Psoas muscle (tissue), 8 donors: ENCODE measurements at regions of chr7 and their contacts with region 1.

Region 1: GRCh38 chr7:568031-568951 is 48.6 kb upstream of the PDGFA start:
- DNase-seq: peak in 1 of 2 donors; percentile 50
- ATAC-seq: peak; percentile 37 to 53 (median 51)
- H3K4me3 ChIP-seq: no peak overlapping the region
- H3K27ac ChIP-seq: peak overlapping the region; percentile 30
- H3K4me1 ChIP-seq: peaks cover 7% of the 10 kb centered on the region
- H3K27me3 ChIP-seq: peaks cover 0 to 44% (median 8%) of the 10 kb centered on the region in 3 donors
- CTCF ChIP-seq: no peak

Region 2: DNA sequence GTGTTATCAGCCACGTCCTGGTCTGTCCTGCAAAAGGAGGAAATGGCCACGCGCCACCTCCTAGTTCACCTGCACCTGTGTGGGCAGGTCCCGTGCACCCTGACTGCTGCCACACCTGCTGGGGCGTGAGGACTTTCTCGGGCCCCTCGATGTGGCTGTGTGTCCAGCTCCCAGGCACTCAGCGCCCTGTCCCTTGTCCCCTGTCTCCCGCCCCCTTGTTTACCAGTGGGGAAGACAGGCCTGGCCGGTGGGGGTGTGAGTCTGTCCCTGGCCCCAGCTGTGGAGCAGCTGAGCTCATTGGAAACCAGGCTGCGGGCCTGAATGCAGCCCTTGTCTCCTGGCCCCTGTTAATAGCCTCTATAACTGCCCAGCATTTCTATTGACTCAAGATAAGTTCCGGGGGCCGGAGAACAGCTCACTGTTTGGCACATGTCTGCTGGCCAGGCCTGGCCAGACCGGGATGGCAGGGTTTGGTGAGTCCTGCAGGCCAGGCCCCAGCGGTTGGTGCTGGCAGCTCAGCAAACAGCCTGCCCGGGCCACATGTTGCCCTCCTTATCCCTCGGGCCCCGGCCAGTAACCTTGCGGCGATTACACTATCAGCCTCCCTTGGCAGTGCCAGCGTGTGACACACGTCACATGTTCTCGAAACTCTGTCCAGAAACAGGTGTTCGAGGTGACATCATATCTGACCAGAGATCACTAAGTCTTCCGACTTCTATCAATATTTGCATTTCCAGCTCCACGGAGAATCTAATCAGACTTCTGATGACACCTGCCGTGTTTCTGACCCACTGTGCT is 226.3 kb before region 1 on chr7:
- intact Hi-C with region 1: loop called in 1 of 2 experiments (anchors 10 kb)
- DNase-seq: peak; percentile 67 to 83
- ATAC-seq: peak; percentile 92 to 96 (median 96)
- H3K4me3 ChIP-seq: no peak overlapping the region
- H3K27ac ChIP-seq: peak overlapping the region; percentile 77
- H3K4me1 ChIP-seq: peaks cover 5% of the 10 kb centered on the region
- H3K27me3 ChIP-seq: peaks cover 0 to 5% (median 0%) of the 10 kb centered on the region in 3 donors
- CTCF ChIP-seq: no peak

Region 3: GRCh38 chr7:537911-538634 is 30.2 kb before region 1 on chr7:
- intact Hi-C with region 1: no loop called
- DNase-seq: peak in 1 of 2 donors; percentile 63
- ATAC-seq: peak; percentile 47 to 83 (median 65)
- H3K4me3 ChIP-seq: no peak overlapping the region
- H3K27ac ChIP-seq: no peak overlapping the region
- H3K4me1 ChIP-seq: no peaks in the 10 kb centered on the region
- H3K27me3 ChIP-seq: peaks cover 0 to 2% (median 0%) of the 10 kb centered on the region in 3 donors
- CTCF ChIP-seq: no peak

Region 4: GRCh38 chr7:621572-622285 is 53.4 kb after region 1 on chr7:
- intact Hi-C with region 1: no loop called
- DNase-seq: peak in 1 of 2 donors; percentile 15
- ATAC-seq: no peak
- H3K4me3 ChIP-seq: no peak overlapping the region
- H3K27ac ChIP-seq: no peak overlapping the region
- H3K4me1 ChIP-seq: no peaks in the 10 kb centered on the region
- H3K27me3 ChIP-seq: peaks cover 0 to 3% (median 0%) of the 10 kb centered on the region in 3 donors
- CTCF ChIP-seq: no peak